Heart right ventricle (tissue), 16 donors: ENCODE measurements at regions of chr9 and their contacts with region 1.

Region 1: DNA sequence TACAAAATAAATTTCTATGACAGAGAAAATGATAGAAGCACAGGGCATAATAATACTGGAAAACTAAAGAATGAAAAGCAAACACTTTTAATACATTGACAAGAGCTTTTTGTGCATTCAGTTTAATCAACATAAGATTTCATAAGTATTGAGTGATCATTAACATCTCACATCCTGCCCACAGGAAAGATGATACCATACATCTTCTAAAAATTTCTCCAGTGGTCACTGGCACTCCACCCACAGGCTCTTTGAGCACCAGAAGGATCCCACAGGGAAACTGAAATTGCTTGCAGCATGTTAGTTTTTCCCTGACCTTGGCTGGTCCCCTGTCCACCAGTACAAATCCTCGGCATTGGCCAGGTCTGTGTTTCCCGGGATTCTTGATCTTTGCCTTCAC is 186.0 kb downstream of the CEMIP2 start:
- DNase-seq: no peak
- ATAC-seq: no peak
- H3K4me3 ChIP-seq: no peak overlapping the region
- H3K27ac ChIP-seq: no peak overlapping the region
- H3K4me1 ChIP-seq: no peaks in the 10 kb centered on the region
- H3K27me3 ChIP-seq: no peaks in the 10 kb centered on the region
- CTCF ChIP-seq: no peak

Region 2: DNA sequence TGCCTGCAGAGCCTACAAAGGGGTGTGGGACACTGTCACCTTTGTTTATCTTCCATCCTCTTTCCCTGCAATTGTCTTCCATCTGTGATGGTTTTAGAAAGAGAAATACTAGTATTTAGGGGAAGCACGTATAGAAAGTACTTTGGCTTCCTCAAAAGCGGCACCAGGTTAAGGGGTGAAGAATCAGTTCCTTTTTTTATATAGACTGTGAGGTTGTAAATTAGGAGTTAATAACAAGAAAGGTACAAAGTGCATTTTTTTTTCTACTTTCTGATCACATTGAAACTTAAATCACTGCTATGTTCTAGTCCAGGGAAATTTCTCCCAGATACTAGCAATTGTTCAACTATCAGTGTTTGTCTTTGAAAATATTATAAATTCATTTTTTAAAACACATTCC is 33.3 kb before region 1 on chr9:
- intact Hi-C with region 1: loop called in 1 of 10 experiments (anchors 1 kb)
- DNase-seq: no peak
- ATAC-seq: no peak
- H3K4me3 ChIP-seq: no peak overlapping the region
- H3K27ac ChIP-seq: no peak overlapping the region
- H3K4me1 ChIP-seq: no peaks in the 10 kb centered on the region
- H3K27me3 ChIP-seq: peaks cover 0 to 20% (median 6%) of the 10 kb centered on the region in 7 donors
- CTCF ChIP-seq: no peak

Region 3: DNA sequence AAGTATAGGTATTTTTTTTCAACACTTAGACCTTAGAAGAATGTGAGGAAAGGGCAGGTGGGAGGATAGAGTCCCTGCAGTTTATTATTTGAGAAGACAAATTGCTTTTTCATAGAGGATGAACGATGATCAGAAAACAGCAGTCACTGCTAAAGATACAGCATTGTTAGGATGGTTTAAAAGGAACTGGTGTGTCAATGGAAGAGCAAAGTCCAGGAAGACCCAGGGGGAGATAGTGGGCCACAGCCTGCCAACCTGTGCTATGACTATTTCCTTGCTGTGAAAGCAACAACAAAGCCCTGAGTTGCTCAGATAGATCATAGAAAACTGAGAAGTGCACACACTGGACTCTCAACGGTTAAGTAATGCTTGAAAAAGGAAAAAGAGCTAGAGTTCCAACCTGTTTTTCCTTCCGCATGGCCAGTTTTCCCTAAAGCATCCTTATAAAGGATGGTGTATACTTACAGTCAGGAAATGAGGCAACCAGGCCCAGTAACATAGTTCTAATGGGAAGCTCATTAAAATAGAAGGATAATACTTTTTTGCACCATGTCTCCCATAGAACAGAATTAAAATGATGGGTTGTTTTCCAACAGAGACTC is 32.2 kb after region 1 on chr9:
- intact Hi-C with region 1: loop called in 1 of 10 experiments (anchors 2 kb)
- DNase-seq: no peak
- ATAC-seq: no peak
- H3K4me3 ChIP-seq: no peak overlapping the region
- H3K27ac ChIP-seq: no peak overlapping the region
- H3K4me1 ChIP-seq: no peaks in the 10 kb centered on the region
- H3K27me3 ChIP-seq: no peaks in the 10 kb centered on the region
- CTCF ChIP-seq: no peak